Spleen (tissue), 13 donors: ENCODE measurements at regions of chr12 and their contacts with region 1.

Region 1: GRCh38 chr12:48795480-48796455 is 6.9 kb upstream of the ADCY6 start:
- DNase-seq: no peak
- H3K4me3 ChIP-seq: no peak overlapping the region
- H3K27ac ChIP-seq: no peak overlapping the region
- H3K4me1 ChIP-seq: peaks cover 0 to 10% (median 7%) of the 10 kb centered on the region in 6 donors
- H3K27me3 ChIP-seq: peaks cover 0 to 21% (median 0%) of the 10 kb centered on the region in 7 donors
- CTCF ChIP-seq: peak; percentile 84 to 98 (median 94)
- POLR2A ChIP-seq: peak in 1 of 3 donors; percentile 1

Region 2: DNA sequence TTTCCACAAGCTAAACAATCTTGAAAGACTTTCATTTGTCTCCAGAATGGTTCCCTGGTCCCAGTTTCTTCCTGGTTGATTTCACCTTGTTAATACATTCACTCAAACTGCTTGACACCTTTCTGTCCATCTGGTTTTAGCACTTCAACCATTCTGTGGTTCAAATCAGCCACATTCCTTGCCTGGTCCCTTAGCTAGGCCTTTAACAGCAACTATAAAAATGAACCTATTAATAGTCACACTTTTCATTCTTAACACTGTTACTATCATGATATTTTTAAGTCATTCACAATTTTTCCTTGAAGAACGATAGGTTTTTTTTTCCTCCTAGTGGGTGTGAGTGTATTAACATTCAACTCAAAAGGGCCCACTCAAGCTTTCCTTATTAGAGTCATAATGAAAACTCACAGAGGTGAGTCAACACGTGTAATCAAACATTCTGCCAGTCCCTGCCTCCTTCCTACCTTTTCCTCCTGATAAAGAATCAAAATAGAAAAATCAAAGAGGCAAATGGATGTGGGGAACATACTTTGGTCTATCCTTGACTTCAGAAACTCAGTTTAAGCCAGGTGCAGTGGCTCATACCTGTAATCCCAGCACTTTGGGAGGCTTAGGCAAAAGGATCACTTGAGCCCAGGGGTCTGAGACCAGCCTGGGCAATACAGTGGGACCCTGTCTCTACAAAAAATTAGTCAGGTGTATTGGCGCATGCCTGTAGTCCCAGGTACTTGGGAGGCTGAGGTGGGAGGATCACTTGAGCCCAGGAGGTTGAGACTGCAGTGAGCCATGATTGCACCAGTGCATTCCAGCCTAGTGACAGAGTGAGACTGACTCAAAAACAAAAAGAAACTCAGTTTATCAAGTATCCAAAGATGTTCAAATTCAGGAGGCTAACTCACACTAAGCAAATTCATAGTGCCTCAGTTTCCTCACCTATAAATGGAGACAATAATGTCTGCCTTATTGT is 44.7 kb before region 1 on chr12:
- intact Hi-C with region 1: loop called (anchors 5 kb)
- DNase-seq: no peak
- H3K4me3 ChIP-seq: no peak overlapping the region
- H3K27ac ChIP-seq: no peak overlapping the region
- H3K4me1 ChIP-seq: peaks cover 0 to 6% (median 0%) of the 10 kb centered on the region in 6 donors
- H3K27me3 ChIP-seq: no peaks in the 10 kb centered on the region
- CTCF ChIP-seq: no peak
- POLR2A ChIP-seq: no peak

Region 3: DNA sequence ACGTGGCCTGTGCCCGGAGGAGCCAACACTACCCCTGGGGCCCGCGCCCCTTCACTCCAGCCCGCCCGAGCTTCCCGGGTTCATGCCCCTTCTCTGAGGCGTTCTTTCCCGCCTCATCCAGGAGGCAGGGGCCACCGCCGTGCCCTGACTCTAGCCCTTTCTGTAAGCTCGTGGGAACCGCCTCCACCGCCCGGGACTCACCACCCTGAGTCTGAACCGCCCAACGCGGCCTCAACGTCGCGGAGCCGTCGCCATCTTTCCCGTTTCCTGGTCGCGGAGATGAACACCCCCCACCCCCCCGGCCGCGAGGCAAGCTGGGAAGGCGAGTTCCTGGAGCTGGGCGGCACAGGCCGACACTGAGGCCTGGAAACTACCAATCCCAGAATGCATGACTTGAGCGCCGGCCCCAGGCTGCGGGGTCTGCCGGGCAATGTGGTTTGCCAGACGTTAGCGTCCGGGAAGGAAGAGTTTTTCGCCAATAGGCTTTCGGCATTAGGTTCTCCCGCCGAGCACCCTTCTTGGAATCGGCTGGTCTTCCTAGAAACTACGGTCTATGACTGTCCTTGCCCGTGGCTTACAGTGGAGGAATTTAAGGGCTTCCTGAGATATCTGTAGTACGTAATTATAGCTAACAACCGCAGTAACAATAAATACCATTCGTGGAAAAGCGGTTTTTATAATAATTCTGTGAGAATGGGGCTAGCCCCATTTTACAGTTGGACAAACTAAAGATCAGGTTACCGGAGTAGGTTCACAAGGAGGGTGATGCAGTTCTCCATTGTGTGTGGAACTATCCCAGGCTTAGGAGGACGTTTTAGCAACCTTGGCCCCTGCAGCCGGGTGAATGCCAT is 56.3 kb after region 1 on chr12 and contains the start of gene DDX23:
- intact Hi-C with region 1: no loop called
- DNase-seq: peak; percentile 97
- H3K4me3 ChIP-seq: peak within 1 kb of the TSS; percentile 70 to 99 (median 91)
- H3K27ac ChIP-seq: peak within 1 kb of the TSS; percentile 82 to 93 (median 92)
- H3K4me1 ChIP-seq: peaks cover 23 to 60% (median 46%) of the 10 kb centered on the region in 6 donors
- H3K27me3 ChIP-seq: no peaks in the 10 kb centered on the region
- CTCF ChIP-seq: peak in 1 of 11 experiments; percentile 34
- POLR2A ChIP-seq: peak in 2 of 3 donors; percentile 3 to 34
- total RNA-seq, gene DDX23: 71.7 to 104 (median 91.7) TPM